CD4-positive, alpha-beta memory T cell (primary cell): ENCODE measurements at regions of chr1 and their contacts with region 1.

Region 1: GRCh38 chr1:98048244-98048643 is 127.4 kb upstream of the DPYD start:
- DNase-seq: peak; percentile 64 to 74 (median 71)
- H3K4me3 ChIP-seq: no peak overlapping the region
- H3K4me3 Mint-ChIP-seq: peak overlapping the region in 7 of 8 donors; percentile 13 to 67 (median 29)
- H3K27ac ChIP-seq: no peak overlapping the region
- H3K27ac Mint-ChIP-seq: peak overlapping the region in 2 of 7 donors; percentile 24 to 64
- H3K4me1 ChIP-seq: peaks cover 38% of the 10 kb centered on the region
- H3K4me1 Mint-ChIP-seq: peaks cover 27 to 48% (median 38%) of the 10 kb centered on the region in 4 donors
- H3K27me3 ChIP-seq: peaks cover 51% of the 10 kb centered on the region
- H3K27me3 Mint-ChIP-seq: peaks cover 60 to 69% of the 10 kb centered on the region in 2 donors

Region 2: GRCh38 chr1:96721416-96722160 is 1326.7 kb before region 1 on chr1 and contains the start of gene PTBP2:
- CTCF ChIA-PET with region 1: no interaction called
- POLR2A ChIA-PET with region 1: no interaction called
- intact Hi-C with region 1: loop called (anchors 10 kb)
- DNase-seq: peak; percentile 82 to 89 (median 86)
- H3K4me3 ChIP-seq: peak within 1 kb of the TSS; percentile 83 to 88
- H3K4me3 Mint-ChIP-seq: peak within 1 kb of the TSS; percentile 93 to 99 (median 96)
- H3K27ac ChIP-seq: peak within 1 kb of the TSS; percentile 89
- H3K27ac Mint-ChIP-seq: peak within 1 kb of the TSS; percentile 89 to 97 (median 96)
- H3K4me1 ChIP-seq: peaks cover 25% of the 10 kb centered on the region
- H3K4me1 Mint-ChIP-seq: peaks cover 18 to 37% (median 26%) of the 10 kb centered on the region in 4 donors
- H3K27me3 ChIP-seq: no peaks in the 10 kb centered on the region
- H3K27me3 Mint-ChIP-seq: no peaks in the 10 kb centered on the region
- total RNA-seq, gene PTBP2: 20.6 to 21.0 TPM

Region 3: GRCh38 chr1:97332716-97333115 is 715.5 kb before region 1 on chr1:
- CTCF ChIA-PET with region 1: no interaction called
- POLR2A ChIA-PET with region 1: no interaction called
- intact Hi-C with region 1: no loop called
- DNase-seq: no peak
- H3K4me3 ChIP-seq: no peak overlapping the region
- H3K4me3 Mint-ChIP-seq: no peak overlapping the region
- H3K27ac ChIP-seq: no peak overlapping the region
- H3K27ac Mint-ChIP-seq: no peak overlapping the region
- H3K4me1 ChIP-seq: no peaks in the 10 kb centered on the region
- H3K4me1 Mint-ChIP-seq: no peaks in the 10 kb centered on the region
- H3K27me3 ChIP-seq: no peaks in the 10 kb centered on the region
- H3K27me3 Mint-ChIP-seq: no peaks in the 10 kb centered on the region

Region 4: DNA sequence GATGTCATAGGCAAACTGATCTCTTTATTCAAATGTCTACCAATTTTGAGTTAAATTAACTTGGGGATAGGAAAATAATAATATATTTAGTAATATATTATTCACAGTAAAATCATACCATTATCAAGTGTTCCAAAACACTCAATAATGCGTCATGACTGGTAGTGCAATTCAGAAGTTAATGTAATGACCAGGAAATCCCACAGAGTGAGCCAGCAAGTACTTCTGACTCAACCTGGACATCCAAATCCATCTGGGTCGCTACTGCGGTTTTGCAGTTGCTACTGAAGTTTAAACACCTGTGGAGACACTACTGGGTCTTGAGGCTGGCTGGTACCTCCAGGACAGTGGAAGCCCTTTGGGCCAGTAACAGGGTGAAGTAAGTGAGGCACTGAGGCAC is 172.2 kb before region 1 on chr1:
- CTCF ChIA-PET with region 1: no interaction called
- POLR2A ChIA-PET with region 1: no interaction called
- intact Hi-C with region 1: no loop called
- DNase-seq: no peak
- H3K4me3 ChIP-seq: no peak overlapping the region
- H3K4me3 Mint-ChIP-seq: no peak overlapping the region
- H3K27ac ChIP-seq: no peak overlapping the region
- H3K27ac Mint-ChIP-seq: no peak overlapping the region
- H3K4me1 ChIP-seq: no peaks in the 10 kb centered on the region
- H3K4me1 Mint-ChIP-seq: peaks cover 14 to 29% (median 19%) of the 10 kb centered on the region in 4 donors
- H3K27me3 ChIP-seq: no peaks in the 10 kb centered on the region
- H3K27me3 Mint-ChIP-seq: no peaks in the 10 kb centered on the region

Region 5: DNA sequence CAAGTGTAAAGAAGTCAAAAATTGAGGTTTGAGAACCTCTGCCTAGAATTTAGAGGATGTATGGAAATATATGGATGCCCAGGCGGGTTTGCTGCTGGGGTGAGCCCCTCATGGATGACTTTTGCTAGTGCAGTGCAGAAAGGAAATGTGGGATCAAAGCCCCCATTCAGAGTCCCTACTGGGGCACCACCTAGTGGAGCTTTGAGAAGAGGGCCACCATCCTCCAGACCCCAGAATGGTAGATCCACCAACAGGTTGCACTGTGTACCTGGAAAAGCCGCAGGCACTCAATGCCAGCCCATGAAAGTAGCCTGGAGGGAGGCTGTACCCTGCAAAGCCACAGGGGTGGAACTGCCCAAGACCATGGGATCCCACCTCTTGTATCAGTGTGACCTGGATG is 203.3 kb after region 1 on chr1:
- CTCF ChIA-PET with region 1: no interaction called
- POLR2A ChIA-PET with region 1: no interaction called
- intact Hi-C with region 1: no loop called
- DNase-seq: no peak
- H3K4me3 ChIP-seq: no peak overlapping the region
- H3K4me3 Mint-ChIP-seq: no peak overlapping the region
- H3K27ac ChIP-seq: no peak overlapping the region
- H3K27ac Mint-ChIP-seq: no peak overlapping the region
- H3K4me1 ChIP-seq: no peaks in the 10 kb centered on the region
- H3K4me1 Mint-ChIP-seq: no peaks in the 10 kb centered on the region
- H3K27me3 ChIP-seq: no peaks in the 10 kb centered on the region
- H3K27me3 Mint-ChIP-seq: peaks cover 0 to 3% of the 10 kb centered on the region in 2 donors